A549 (cell line): ENCODE measurements at regions of chr16 and their contacts with region 1.

Region 1: GRCh38 chr16:81403616-81404373 is 40.8 kb upstream of the CMIP start:
- DNase-seq: peak; percentile 92
- ATAC-seq: peak; percentile 71 to 74
- H3K4me3 ChIP-seq: no peak overlapping the region
- H3K27ac ChIP-seq: peak overlapping the region; percentile 97 to 100
- H3K4me1 ChIP-seq: peaks cover 77% of the 10 kb centered on the region
- CTCF ChIP-seq: peak; percentile 89
- EP300 ChIP-seq: peak in 1 of 2 experiments; percentile 20; a peak in 1 of 5 replicates
- POLR2A ChIP-seq: no peak
- RAD21 ChIP-seq: peak; percentile 99

Region 2: DNA sequence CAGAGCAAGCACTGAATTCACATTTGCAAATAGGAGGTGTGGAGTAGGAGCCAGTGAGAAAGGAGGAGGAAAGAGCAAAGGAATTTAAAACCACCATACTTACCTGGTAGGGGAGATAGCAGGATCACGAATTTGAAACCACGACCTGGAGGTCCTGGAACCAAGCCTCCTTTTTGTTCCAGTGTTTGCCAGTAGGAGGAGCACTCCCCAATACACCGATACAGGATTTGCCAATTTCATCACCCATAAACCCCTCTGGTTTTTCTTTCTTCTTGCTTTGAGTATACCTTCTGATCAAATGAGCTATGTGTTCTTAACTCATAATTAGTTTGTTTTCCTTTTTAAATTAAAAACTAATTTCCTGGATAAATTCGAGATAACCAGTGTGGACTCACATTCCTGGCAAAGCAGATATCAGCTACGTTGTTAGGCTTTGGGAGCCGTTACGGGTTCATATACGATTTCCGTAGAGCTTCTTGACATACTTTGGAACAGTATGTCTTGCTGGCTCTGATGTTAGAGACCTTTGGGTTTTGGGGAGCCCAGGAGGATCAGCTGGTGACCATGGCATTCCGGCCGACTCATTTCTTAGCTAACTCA is 142.6 kb before region 1 on chr16:
- CTCF ChIA-PET with region 1: no interaction called
- POLR2A ChIA-PET with region 1: no interaction called
- DNase-seq: peak; percentile 27 to 52
- ATAC-seq: peak; percentile 64 to 77; a peak in 4 of 6 replicates
- H3K4me3 ChIP-seq: no peak overlapping the region
- H3K27ac ChIP-seq: no peak overlapping the region
- H3K4me1 ChIP-seq: no peaks in the 10 kb centered on the region
- CTCF ChIP-seq: peak; percentile 61
- EP300 ChIP-seq: no peak
- POLR2A ChIP-seq: no peak
- RAD21 ChIP-seq: peak; percentile 37 to 52; a peak in 4 of 5 replicates

Region 3: DNA sequence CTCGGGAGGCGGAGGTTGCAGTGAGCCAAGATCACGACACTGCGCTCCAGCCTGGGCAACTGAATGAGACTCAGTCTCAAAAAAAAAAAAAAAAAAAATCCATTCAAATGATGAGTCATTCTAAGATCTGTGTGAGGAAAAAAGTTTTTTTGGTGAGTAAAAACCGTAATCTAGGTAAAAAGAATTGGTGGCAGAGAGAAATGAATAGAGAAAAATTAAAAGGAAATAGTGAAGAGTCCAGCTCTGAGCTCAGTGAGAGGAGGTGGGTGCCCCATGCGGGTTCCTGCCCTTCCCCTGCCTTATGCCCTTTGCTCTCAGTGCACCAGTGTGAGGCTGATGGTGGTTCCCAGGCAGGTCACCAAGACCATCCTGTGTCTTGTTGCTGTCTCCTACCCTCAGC is 68.1 kb before region 1 on chr16:
- CTCF ChIA-PET with region 1: no interaction called
- POLR2A ChIA-PET with region 1: no interaction called
- DNase-seq: no peak
- ATAC-seq: no peak; a peak in 1 of 6 replicates
- H3K4me3 ChIP-seq: no peak overlapping the region
- H3K27ac ChIP-seq: no peak overlapping the region
- H3K4me1 ChIP-seq: no peaks in the 10 kb centered on the region
- CTCF ChIP-seq: no peak
- EP300 ChIP-seq: no peak
- POLR2A ChIP-seq: no peak
- RAD21 ChIP-seq: no peak

Region 4: DNA sequence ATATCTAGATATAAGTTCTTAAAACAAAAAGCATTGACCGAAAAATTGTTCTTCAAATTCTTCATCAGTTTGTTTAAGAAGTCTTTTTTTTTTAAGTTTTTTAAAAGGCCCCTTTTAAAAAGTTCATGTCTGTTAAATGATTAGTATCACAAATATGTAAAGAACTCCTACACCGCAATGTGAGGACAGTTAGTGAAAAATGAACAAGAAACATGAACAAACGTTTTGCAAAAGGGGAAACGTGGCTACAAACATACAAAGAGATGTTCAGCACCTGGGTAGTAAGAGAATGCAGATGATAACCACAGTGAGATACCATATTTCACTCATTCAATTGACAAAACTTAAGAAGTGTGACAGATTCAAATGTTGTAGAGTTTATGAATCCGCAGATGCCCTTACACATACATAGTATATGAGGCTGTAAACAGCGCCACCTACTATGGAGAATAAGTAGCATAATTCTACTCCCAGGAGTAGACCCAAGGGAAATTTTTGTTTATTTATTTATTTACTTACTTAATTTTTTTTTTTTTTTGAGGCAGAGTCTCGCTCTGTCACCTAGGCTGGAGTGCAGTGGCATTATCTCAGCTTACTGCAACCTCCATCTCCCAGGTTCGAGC is 53.7 kb before region 1 on chr16:
- CTCF ChIA-PET with region 1: no interaction called
- POLR2A ChIA-PET with region 1: no interaction called
- DNase-seq: peak in 1 of 2 experiments; percentile 14
- ATAC-seq: no peak
- H3K4me3 ChIP-seq: no peak overlapping the region
- H3K27ac ChIP-seq: no peak overlapping the region
- H3K4me1 ChIP-seq: no peaks in the 10 kb centered on the region
- CTCF ChIP-seq: no peak
- EP300 ChIP-seq: no peak
- POLR2A ChIP-seq: no peak
- RAD21 ChIP-seq: peak in 1 of 2 experiments; percentile 22; a peak in 1 of 5 replicates

Region 5: GRCh38 chr16:81443688-81444447 is 40.1 kb after region 1 on chr16:
- CTCF ChIA-PET with region 1: interaction called, 16 read pairs
- POLR2A ChIA-PET with region 1: interaction called, 4 read pairs
- DNase-seq: no peak
- ATAC-seq: peak; percentile 2 to 11; a peak in 5 of 6 replicates
- H3K4me3 ChIP-seq: peak overlapping the region; percentile 79
- H3K27ac ChIP-seq: peak overlapping the region; percentile 98 to 99
- H3K4me1 ChIP-seq: peaks cover 28% of the 10 kb centered on the region
- CTCF ChIP-seq: no peak
- EP300 ChIP-seq: no peak
- POLR2A ChIP-seq: no peak
- RAD21 ChIP-seq: no peak

Region 6: DNA sequence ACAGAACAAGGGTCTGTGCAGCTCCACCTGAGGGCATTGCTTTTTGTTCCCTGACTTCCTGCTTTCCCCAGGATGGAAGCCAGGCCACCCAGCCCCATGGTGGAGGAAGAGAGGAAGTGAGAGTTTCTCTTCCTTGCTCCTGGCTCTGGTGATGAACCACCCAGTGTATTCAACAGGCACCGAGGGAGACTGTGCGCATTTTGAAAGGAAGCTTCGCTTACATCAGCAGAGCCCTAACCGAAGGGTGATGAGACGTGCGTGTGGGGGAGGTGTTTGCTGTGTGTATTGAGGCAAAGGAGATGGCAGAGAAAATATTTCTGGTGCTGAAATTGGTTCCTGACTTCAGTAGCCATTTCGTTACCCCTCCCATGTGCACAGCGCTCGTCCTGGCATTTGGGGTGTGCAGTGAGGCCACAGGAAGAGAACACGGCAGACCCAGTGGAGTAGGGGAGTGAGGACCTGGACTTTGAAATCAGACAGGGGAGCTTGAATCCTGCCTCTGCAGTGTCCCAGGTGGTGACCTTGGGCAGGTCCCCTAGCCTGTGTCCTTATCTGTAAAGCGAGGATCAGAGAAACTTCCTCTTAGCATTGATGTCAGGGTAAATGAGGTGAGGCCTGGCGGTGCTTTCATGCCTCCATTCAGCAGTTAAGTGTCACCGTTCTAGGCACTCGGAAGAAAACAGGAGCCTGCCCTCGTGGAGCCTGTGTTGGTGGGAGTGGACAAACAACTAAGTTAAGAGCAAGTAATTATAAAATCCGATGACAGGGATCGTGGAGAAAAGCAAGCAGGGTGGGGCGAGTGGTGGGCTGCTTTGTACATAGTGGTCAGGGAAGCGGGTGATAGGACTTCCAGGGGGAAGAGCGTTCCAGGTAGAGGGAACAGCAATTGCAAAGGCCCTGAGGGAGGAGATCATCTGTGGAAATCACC is 48.2 kb after region 1 on chr16:
- CTCF ChIA-PET with region 1: interaction called, 16 read pairs
- POLR2A ChIA-PET with region 1: no interaction called
- DNase-seq: no peak
- ATAC-seq: peak in 1 of 2 experiments; percentile 1; a peak in 1 of 6 replicates
- H3K4me3 ChIP-seq: peak overlapping the region; percentile 11; the same call in 2 of the 3 replicates
- H3K27ac ChIP-seq: peak overlapping the region; percentile 69 to 99
- H3K4me1 ChIP-seq: peaks cover 91% of the 10 kb centered on the region
- CTCF ChIP-seq: no peak
- EP300 ChIP-seq: no peak
- POLR2A ChIP-seq: no peak
- RAD21 ChIP-seq: no peak

Region 7: GRCh38 chr16:81567987-81568748 is 164.4 kb after region 1 on chr16:
- CTCF ChIA-PET with region 1: interaction called, 10 read pairs
- POLR2A ChIA-PET with region 1: no interaction called
- DNase-seq: peak; percentile 60 to 87
- ATAC-seq: peak; percentile 73 to 75
- H3K4me3 ChIP-seq: no peak overlapping the region
- H3K27ac ChIP-seq: peak overlapping the region; percentile 78 to 86
- H3K4me1 ChIP-seq: peaks cover 93% of the 10 kb centered on the region
- CTCF ChIP-seq: no peak
- EP300 ChIP-seq: no peak; a peak in 1 of 5 replicates
- POLR2A ChIP-seq: no peak
- RAD21 ChIP-seq: peak in 1 of 2 experiments; percentile 21; a peak in 2 of 5 replicates

Region 8: DNA sequence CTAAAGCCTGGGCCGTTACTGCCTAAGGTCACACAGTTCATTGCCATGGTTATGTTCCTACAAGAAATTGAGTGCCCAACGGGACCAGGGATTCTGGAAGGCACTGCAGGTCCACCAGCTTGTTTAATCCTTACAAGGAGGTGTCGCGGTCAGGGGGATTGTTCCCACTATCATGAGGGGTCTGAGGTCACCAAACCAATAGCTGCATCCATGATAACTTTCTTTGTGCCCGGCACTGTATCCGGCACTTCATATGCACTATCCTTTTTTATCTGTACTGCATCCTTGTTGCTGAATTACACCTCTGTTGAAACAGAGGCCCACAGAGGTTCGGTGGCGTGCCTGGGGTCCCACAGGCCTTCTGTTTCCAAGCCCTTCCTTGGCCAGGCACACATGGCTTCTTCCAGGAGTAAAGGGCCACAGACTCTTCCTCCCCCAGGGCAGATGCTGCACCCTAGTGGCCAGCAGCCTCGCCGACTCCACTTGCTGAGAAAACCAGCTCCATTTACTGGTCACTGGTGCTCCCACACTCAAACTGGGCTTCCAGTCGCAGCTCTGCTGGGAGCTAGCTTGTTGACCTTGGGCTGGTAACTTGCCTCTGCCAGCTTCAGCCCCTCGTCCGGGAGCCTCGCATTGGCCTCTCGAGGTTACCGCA is 293.3 kb after region 1 on chr16:
- CTCF ChIA-PET with region 1: interaction called, 14 read pairs
- POLR2A ChIA-PET with region 1: no interaction called
- DNase-seq: peak; percentile 59 to 76
- ATAC-seq: peak; percentile 59 to 78; a peak in 5 of 6 replicates
- H3K4me3 ChIP-seq: no peak overlapping the region
- H3K27ac ChIP-seq: peak overlapping the region; percentile 10 to 75; a peak in 4 of 6 replicates
- H3K4me1 ChIP-seq: peaks cover 40% of the 10 kb centered on the region
- CTCF ChIP-seq: peak; percentile 66
- EP300 ChIP-seq: no peak
- POLR2A ChIP-seq: no peak
- RAD21 ChIP-seq: peak; percentile 70 to 73

Region 9: GRCh38 chr16:81723098-81723723 is 319.4 kb after region 1 on chr16:
- CTCF ChIA-PET with region 1: interaction called, 34 read pairs
- POLR2A ChIA-PET with region 1: no interaction called
- DNase-seq: peak; percentile 89 to 92
- ATAC-seq: peak; percentile 93 to 94
- H3K4me3 ChIP-seq: no peak overlapping the region
- H3K27ac ChIP-seq: peak overlapping the region; percentile 75 to 94
- H3K4me1 ChIP-seq: peaks cover 36% of the 10 kb centered on the region
- CTCF ChIP-seq: peak; percentile 90
- EP300 ChIP-seq: no peak
- POLR2A ChIP-seq: no peak
- RAD21 ChIP-seq: peak; percentile 94 to 96